Common myeloid progenitor, CD34-positive (primary cell): ENCODE measurements at regions of chr19 and their contacts with region 1.

Region 1: DNA sequence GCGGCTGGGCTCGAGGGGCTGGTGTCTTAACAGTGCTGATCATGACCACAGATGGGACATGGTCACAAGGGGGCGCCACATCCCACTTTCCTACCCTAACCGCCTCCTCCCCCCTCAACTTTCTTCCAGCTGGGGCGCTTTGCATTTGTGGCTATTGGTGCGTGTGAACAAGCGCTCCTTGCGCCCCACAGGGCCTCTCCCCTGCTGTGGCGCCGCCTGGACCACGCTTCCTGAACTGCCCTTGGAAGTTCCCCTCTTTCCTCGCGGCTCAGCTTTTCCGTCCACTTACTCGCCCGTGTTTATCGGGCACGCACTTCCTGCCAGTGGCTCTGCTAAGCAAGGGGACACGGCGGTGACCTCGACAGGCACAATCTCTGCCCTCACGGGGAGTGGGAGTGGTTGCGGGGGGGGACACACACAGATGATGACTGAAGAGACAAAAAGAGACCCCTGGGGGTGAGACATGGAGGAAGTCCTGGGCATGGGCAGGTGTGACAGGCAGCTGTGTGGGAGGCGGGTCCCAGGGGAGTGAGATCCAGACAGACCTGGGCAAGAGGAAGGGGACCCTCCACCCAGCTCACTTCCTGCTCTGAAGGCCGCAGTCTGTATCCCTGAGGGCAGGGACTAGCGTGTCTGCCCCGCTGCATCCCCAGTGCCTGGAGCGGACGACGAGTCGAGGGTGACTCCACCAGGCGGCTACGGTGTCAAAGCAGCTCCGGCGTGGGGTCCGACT is 40.3 kb downstream of the ZNF787 start:
- DNase-seq: peak; percentile 77 to 90 (median 89)
- H3K4me3 ChIP-seq: peak overlapping the region; percentile 11 to 63 (median 50)
- H3K27ac ChIP-seq: no peak overlapping the region
- H3K4me1 ChIP-seq: peaks cover 0 to 12% (median 10%) of the 10 kb centered on the region in 4 experiments
- H3K27me3 ChIP-seq: peaks cover 0 to 5% (median 0%) of the 10 kb centered on the region in 5 experiments

Region 2: GRCh38 chr19:56053596-56053995 is 27.2 kb before region 1 on chr19:
- CTCF ChIA-PET with region 1: no interaction called
- POLR2A ChIA-PET with region 1: no interaction called
- DNase-seq: no peak
- H3K4me3 ChIP-seq: no peak overlapping the region
- H3K27ac ChIP-seq: no peak overlapping the region
- H3K4me1 ChIP-seq: no peaks in the 10 kb centered on the region
- H3K27me3 ChIP-seq: peaks cover 0 to 3% (median 0%) of the 10 kb centered on the region in 5 experiments

Region 3: GRCh38 chr19:56066152-56067023 is 14.4 kb before region 1 on chr19:
- CTCF ChIA-PET with region 1: interaction called, 39 read pairs
- POLR2A ChIA-PET with region 1: no interaction called
- DNase-seq: peak; percentile 69 to 84 (median 74)
- H3K4me3 ChIP-seq: peak overlapping the region; percentile 11 to 86 (median 69)
- H3K27ac ChIP-seq: no peak overlapping the region
- H3K4me1 ChIP-seq: peaks cover 0 to 14% (median 10%) of the 10 kb centered on the region in 4 experiments
- H3K27me3 ChIP-seq: peaks cover 0 to 11% (median 3%) of the 10 kb centered on the region in 5 experiments

Region 4: GRCh38 chr19:56170261-56170660 is 89.4 kb after region 1 on chr19:
- CTCF ChIA-PET with region 1: interaction called, 23 read pairs
- POLR2A ChIA-PET with region 1: no interaction called
- DNase-seq: no peak
- H3K4me3 ChIP-seq: no peak overlapping the region
- H3K27ac ChIP-seq: no peak overlapping the region
- H3K4me1 ChIP-seq: peaks cover 0 to 6% (median 3%) of the 10 kb centered on the region in 4 experiments
- H3K27me3 ChIP-seq: peaks cover 0 to 18% (median 2%) of the 10 kb centered on the region in 5 experiments

Region 5: DNA sequence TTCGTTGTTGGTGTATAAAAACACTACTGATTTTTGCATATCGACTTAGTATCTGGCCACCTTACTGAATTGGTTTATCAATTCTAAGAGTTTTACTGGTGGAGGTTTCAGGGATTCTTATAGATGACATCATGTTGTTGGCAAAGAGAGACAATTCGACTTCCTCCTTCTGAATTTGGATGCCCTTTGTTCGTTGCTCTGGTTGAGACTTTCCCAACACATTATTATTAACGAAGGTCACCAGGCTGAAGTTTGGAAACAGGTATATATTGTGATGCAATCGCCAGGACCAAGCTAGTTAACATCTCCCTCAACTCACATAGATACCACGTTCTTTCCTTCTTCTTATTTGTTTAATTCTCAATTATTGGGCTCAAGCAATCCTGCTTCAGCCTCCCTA is 118.9 kb after region 1 on chr19:
- CTCF ChIA-PET with region 1: no interaction called
- POLR2A ChIA-PET with region 1: no interaction called
- DNase-seq: no peak
- H3K4me3 ChIP-seq: no peak overlapping the region
- H3K27ac ChIP-seq: no peak overlapping the region
- H3K4me1 ChIP-seq: no peaks in the 10 kb centered on the region
- H3K27me3 ChIP-seq: no peaks in the 10 kb centered on the region